Common myeloid progenitor, CD34-positive (primary cell): ENCODE measurements at regions of chr5 and their contacts with region 1.

Region 1: DNA sequence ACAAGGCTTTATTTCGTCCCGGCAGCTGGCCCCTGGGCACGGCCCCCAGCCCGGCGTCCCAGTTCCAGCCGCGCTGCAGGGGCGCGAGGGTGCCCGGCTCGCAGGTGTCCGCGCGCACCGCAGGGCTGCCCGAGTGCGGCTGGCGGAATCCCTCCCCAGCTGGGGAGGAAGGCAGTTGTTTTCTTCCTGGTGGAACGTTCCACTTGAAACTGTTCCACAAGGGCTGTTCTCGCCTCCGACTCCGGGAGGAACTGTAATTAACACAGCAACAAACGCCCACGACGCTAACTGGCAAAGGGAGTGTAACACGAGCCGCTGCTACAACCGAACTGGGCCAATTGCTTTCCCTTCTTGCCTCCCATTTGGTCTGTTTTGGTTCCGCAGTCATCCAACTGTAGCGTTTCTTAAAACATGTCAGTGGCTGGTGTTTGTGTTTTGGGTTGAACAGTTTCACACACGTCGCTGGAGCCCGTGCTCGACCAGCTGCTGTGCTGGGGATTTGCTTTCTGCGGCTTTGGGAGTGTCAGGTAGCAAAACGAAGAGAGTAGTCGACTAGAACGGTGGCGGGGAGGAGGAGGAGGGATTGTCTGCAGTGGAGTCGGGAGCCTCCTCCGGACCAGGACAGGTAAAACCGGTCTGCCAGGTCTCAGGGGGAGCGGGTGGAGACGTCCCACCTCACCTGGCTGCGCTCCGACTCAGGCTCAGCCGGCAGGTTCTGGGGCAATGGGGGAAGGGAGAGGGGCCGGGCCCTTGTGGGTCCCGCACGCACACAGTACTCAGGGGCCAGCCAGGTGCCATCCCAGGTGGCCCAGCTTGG is 131.6 kb upstream of the NIPBL start:
- DNase-seq: peak; percentile 56 to 81 (median 72)
- H3K4me3 ChIP-seq: peak overlapping the region; percentile 60 to 94 (median 86)
- H3K27ac ChIP-seq: peak overlapping the region in 1 of 2 experiments; percentile 25
- H3K4me1 ChIP-seq: peaks cover 3 to 19% (median 10%) of the 10 kb centered on the region in 4 experiments
- H3K27me3 ChIP-seq: no peaks in the 10 kb centered on the region

Region 2: DNA sequence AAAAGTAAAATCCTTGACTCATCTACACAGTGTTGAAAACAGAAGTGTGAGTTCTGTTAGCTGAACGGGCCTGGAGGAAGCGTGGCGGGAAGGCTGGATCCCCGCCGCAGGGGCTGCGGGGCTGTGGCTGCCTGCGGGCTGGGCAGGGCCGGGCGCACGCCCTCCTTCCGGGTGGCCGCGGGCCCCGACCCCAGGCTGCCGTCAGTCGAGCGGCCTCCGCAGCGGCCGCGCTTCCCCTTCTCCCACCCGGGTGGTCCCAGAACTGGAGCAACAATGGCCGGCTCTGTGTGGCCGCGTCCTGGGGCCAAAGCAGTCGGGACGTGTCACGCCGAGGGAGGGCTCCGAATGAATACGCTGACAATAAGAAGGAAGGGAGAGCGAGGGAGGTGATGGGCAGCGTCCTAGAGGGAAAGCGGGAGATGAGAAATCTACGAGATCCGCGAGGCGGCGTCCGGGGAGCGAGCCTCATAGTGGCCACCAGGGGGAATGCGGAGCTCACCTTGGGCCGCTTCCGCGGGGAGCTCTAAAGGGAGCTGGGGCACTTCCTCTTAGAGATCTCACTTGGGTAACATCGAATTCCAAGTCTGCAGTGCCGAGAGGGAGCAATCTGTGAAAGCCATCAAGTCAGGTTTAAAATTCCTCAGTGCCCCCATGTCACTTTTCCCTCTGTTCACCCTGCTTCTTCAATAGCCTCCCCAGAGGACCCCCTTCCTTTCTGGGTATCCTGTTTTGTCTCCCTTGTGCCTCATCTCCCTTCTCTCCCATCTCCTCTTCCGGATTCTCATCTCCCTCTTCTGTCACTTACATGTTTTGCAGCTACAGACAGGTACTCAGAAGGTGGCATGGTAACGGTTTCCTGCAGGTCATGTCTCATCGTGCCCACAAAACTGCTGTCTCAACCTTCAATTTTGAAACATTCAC is 54.7 kb before region 1 on chr5:
- CTCF ChIA-PET with region 1: no interaction called
- POLR2A ChIA-PET with region 1: no interaction called
- DNase-seq: peak; percentile 82 to 83 (median 83)
- H3K4me3 ChIP-seq: peak overlapping the region; percentile 34 to 82 (median 68)
- H3K27ac ChIP-seq: peak overlapping the region in 1 of 2 experiments; percentile 69
- H3K4me1 ChIP-seq: peaks cover 0 to 41% (median 31%) of the 10 kb centered on the region in 4 experiments
- H3K27me3 ChIP-seq: no peaks in the 10 kb centered on the region

Region 3: DNA sequence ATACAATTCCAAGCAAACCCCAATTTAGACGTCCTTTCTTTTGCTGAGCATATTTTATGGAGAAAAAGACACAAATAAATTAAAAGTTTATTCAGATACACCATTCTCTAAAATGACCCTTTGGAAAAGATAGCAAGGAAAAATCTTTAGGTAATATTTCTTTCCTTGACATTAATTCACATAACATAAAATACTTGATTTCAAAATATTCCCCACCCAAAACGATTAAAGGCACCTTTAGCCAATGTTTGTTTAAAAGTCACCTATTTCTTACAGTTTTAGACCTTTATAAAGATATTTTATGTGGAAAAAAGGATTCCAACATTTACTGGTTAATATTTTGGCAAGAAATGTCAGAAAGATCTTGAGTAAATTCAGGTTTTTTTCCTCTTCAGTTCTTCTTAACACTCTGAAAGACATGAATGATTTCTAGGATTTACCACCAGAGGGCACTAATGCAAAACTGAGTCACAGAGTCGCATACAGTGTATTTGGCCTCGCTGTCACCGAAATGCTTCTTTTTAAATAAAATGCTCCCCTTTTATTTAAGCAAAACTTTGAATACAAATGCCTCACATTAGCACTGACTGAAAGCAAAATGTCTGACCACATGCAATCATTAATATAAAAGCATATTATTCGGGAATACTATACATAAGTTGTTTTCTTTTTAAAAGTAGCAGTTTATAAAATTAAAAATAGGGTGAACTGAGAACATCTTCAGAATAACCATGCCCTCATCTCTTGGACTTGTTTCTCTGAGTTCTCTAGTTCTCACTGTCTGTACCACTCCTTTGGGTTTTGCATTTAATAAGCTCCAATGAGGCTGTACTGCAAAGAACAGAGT is 16.1 kb before region 1 on chr5:
- CTCF ChIA-PET with region 1: interaction called, 28 read pairs
- POLR2A ChIA-PET with region 1: interaction called, 3 read pairs
- DNase-seq: peak; percentile 71 to 88 (median 83)
- H3K4me3 ChIP-seq: peak overlapping the region in 1 of 7 experiments; percentile 10
- H3K27ac ChIP-seq: no peak overlapping the region
- H3K4me1 ChIP-seq: peaks cover 5 to 20% (median 11%) of the 10 kb centered on the region in 4 experiments
- H3K27me3 ChIP-seq: no peaks in the 10 kb centered on the region

Region 4: DNA sequence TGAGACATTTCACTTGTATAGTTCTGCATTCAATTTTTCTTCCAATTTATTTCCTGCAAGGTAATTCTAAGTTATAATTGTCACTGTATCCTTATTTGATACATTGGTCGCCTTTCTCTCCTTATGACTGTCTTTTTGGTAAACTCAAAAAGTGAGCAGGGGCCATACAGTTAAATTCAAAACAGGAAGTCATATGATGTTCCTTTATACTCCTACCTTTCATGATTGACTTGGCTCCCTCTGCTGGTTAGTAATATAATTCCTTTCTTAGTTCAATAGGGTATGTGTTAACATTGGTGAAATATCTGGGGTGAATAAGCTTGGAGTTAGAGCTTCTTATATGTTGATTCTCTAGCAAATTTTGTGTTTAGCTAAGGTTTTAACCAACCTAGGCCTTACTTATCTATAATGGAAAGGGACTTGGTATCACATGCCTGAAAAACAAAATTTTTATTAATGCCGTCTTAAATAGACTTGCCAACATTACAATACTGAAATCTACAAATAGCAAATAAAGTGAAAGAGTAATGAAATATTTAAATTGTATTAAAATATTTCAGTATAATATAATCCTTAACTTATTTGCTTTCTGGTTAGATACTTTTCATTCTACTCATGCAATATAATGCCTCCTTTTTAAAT is 125.5 kb after region 1 on chr5:
- CTCF ChIA-PET with region 1: interaction called, 56 read pairs
- POLR2A ChIA-PET with region 1: interaction called, 3 read pairs
- DNase-seq: peak; percentile 84 to 90 (median 88)
- H3K4me3 ChIP-seq: no peak overlapping the region
- H3K27ac ChIP-seq: no peak overlapping the region
- H3K4me1 ChIP-seq: peaks cover 11 to 37% (median 23%) of the 10 kb centered on the region in 4 experiments
- H3K27me3 ChIP-seq: no peaks in the 10 kb centered on the region

Region 5: GRCh38 chr5:36875790-36876388 is 130.9 kb after region 1 on chr5:
- CTCF ChIA-PET with region 1: interaction called, 56 read pairs
- POLR2A ChIA-PET with region 1: interaction called, 3 read pairs
- DNase-seq: peak; percentile 87 to 91 (median 89)
- H3K4me3 ChIP-seq: peak overlapping the region; percentile 80 to 100 (median 95)
- H3K27ac ChIP-seq: peak overlapping the region; percentile 96 to 98
- H3K4me1 ChIP-seq: peaks cover 11 to 53% (median 28%) of the 10 kb centered on the region in 4 experiments
- H3K27me3 ChIP-seq: no peaks in the 10 kb centered on the region

Region 6: DNA sequence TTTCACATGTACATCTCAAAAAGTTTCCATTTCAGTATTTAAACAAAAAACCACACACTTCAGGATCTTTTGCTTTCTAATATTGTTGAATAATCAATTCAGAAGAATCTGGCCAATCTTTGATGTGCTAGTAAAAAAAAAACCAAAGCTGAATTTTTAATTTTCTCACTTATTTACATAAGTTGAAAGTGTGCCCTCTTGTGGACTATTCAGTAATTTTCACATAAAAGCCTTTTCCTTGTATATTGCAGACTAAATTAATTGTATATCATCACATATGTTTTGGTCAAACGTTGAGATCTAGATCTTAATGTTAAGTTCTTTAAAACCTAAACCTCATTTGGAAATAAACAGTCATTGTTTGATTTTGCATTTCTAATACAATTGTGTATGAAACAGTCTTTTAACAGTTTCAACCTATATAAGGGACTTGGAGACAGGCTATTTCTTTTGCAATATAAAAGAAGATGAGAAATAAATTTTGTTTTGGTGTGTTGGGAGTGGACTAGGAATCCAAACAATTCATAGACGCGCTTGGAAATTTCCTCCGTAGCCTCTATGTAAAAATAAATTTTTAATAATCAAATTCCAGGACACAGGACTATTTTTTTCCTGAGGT is 199.7 kb after region 1 on chr5:
- CTCF ChIA-PET with region 1: interaction called, 11 read pairs
- POLR2A ChIA-PET with region 1: no interaction called
- DNase-seq: peak; percentile 82 to 91 (median 90)
- H3K4me3 ChIP-seq: no peak overlapping the region
- H3K27ac ChIP-seq: no peak overlapping the region
- H3K4me1 ChIP-seq: peaks cover 0 to 3% (median 0%) of the 10 kb centered on the region in 4 experiments
- H3K27me3 ChIP-seq: no peaks in the 10 kb centered on the region